ENCODE measurements at regions of chr1 and their contacts with region 1.

Region 1: GRCh38 chr1:20493839-20494608 is 8.0 kb upstream of the CAMK2N1 start:
- DNase-seq: peak; percentile 88
- H3K4me3 ChIP-seq: peak overlapping the region in 1 of 2 experiments; percentile 26; a peak in 2 of 4 replicates
- H3K27ac ChIP-seq: peak overlapping the region; percentile 9 to 40; a peak in 1 of 4 replicates
- H3K4me1 ChIP-seq: peaks cover 11 to 16% of the 10 kb centered on the region in 2 experiments; a peak in 3 of 4 replicates
- H3K27me3 ChIP-seq: no peaks in the 10 kb centered on the region
- CTCF ChIP-seq: peak; percentile 95
- EP300 ChIP-seq: no peak; a peak in 1 of 4 replicates
- RAD21 ChIP-seq: peak; percentile 100

Region 2: GRCh38 chr1:19974822-19975416 is 519.1 kb before region 1 on chr1:
- CTCF ChIA-PET with region 1: interaction called, 26 read pairs
- POLR2A ChIA-PET with region 1: no interaction called
- DNase-seq: peak; percentile 86
- H3K4me3 ChIP-seq: peak overlapping the region in 1 of 2 experiments; percentile 33; a peak in 2 of 4 replicates
- H3K27ac ChIP-seq: no peak overlapping the region
- H3K4me1 ChIP-seq: 0 out of 4 replicates have a peak, but pooled peaks cover 0 to 2% of the 10 kb centered on the region in 2 experiments
- H3K27me3 ChIP-seq: peaks cover 13% of the 10 kb centered on the region
- CTCF ChIP-seq: peak; percentile 70
- EP300 ChIP-seq: no peak; a peak in 1 of 4 replicates
- RAD21 ChIP-seq: peak; percentile 97

Region 3: GRCh38 chr1:20165522-20165951 is 328.5 kb before region 1 on chr1:
- CTCF ChIA-PET with region 1: interaction called, 17 read pairs
- POLR2A ChIA-PET with region 1: no interaction called
- DNase-seq: peak; percentile 60
- H3K4me3 ChIP-seq: no peak overlapping the region; a peak in 1 of 4 replicates
- H3K27ac ChIP-seq: no peak overlapping the region
- H3K4me1 ChIP-seq: no peaks in the 10 kb centered on the region; a peak in 1 of 4 replicates
- H3K27me3 ChIP-seq: no peaks in the 10 kb centered on the region; the same call in 1 of the 2 replicates
- CTCF ChIP-seq: peak; percentile 39
- EP300 ChIP-seq: no peak
- RAD21 ChIP-seq: peak; percentile 52

Region 4: GRCh38 chr1:20371411-20371810 is 122.6 kb before region 1 on chr1:
- CTCF ChIA-PET with region 1: interaction called, 29 read pairs
- POLR2A ChIA-PET with region 1: no interaction called
- DNase-seq: no peak
- H3K4me3 ChIP-seq: no peak overlapping the region
- H3K27ac ChIP-seq: no peak overlapping the region
- H3K4me1 ChIP-seq: peaks cover 0 to 4% of the 10 kb centered on the region in 2 experiments; a peak in 2 of 4 replicates
- H3K27me3 ChIP-seq: peaks cover 16% of the 10 kb centered on the region
- CTCF ChIP-seq: no peak
- EP300 ChIP-seq: no peak
- RAD21 ChIP-seq: no peak

Region 5: GRCh38 chr1:20416706-20417105 is 77.3 kb before region 1 on chr1:
- CTCF ChIA-PET with region 1: interaction called, 14 read pairs
- POLR2A ChIA-PET with region 1: no interaction called
- DNase-seq: no peak
- H3K4me3 ChIP-seq: no peak overlapping the region
- H3K27ac ChIP-seq: no peak overlapping the region
- H3K4me1 ChIP-seq: peaks cover 2 to 8% of the 10 kb centered on the region in 2 experiments; a peak in 3 of 4 replicates
- H3K27me3 ChIP-seq: no peaks in the 10 kb centered on the region
- CTCF ChIP-seq: no peak
- EP300 ChIP-seq: no peak
- RAD21 ChIP-seq: no peak

Region 6: GRCh38 chr1:20440785-20441200 is 53.2 kb before region 1 on chr1:
- CTCF ChIA-PET with region 1: interaction called, 97 read pairs
- POLR2A ChIA-PET with region 1: no interaction called
- DNase-seq: peak; percentile 80
- H3K4me3 ChIP-seq: no peak overlapping the region
- H3K27ac ChIP-seq: no peak overlapping the region
- H3K4me1 ChIP-seq: peaks cover 0 to 11% of the 10 kb centered on the region in 2 experiments; a peak in 1 of 4 replicates
- H3K27me3 ChIP-seq: no peaks in the 10 kb centered on the region; the same call in 1 of the 2 replicates
- CTCF ChIP-seq: no peak
- EP300 ChIP-seq: no peak
- RAD21 ChIP-seq: no peak

Region 7: GRCh38 chr1:20597650-20598049 is 103.6 kb after region 1 on chr1:
- CTCF ChIA-PET with region 1: no interaction called
- POLR2A ChIA-PET with region 1: no interaction called
- DNase-seq: no peak
- H3K4me3 ChIP-seq: no peak overlapping the region
- H3K27ac ChIP-seq: no peak overlapping the region
- H3K4me1 ChIP-seq: peaks cover 0 to 7% of the 10 kb centered on the region in 2 experiments; a peak in 1 of 4 replicates
- H3K27me3 ChIP-seq: no peaks in the 10 kb centered on the region
- CTCF ChIP-seq: no peak
- EP300 ChIP-seq: no peak
- RAD21 ChIP-seq: no peak